HepG2 (cell line): ENCODE measurements at regions of chr10 and their contacts with region 1.

Region 1: DNA sequence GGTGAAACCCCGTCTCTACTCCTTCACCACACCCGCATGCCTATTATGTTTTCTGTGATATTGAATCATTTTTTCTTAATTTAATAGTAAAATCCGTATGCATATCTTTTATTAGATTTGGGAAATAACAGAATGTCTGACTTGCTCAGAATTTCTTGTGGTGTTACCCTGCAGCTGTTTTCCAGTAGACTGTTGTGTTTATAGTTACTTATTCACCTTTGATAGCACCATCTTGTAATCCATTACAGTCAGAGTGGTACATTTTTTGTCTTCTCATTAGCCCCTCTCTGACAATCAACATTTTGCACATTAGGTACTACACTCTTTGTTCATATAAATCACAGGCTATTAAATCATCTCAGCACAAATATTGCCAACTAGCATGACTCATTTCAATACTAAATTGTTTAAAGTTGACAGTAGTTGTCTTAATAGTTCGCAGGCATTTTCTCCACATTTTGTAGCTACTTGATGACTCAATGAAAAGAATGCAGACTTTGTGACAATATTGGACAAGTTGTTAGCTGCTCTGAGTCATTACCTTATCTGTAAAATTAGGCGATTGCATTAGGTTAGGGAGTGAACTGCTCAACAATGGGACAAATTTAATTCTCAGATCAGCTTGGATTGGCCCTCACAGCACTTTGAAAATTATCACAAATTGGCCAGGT is 17.8 kb upstream of the SLC16A12 start:
- DNase-seq: peak; percentile 37
- ATAC-seq: no peak
- H3K4me3 ChIP-seq: no peak overlapping the region
- H3K27ac ChIP-seq: no peak overlapping the region
- H3K4me1 ChIP-seq: peaks cover 9% of the 10 kb centered on the region; the same call in 1 of the 2 replicates
- H3K27me3 ChIP-seq: no peaks in the 10 kb centered on the region
- CTCF ChIP-seq: no peak
- EP300 ChIP-seq: no peak
- POLR2A ChIP-seq: no peak
- RAD21 ChIP-seq: no peak

Region 2: DNA sequence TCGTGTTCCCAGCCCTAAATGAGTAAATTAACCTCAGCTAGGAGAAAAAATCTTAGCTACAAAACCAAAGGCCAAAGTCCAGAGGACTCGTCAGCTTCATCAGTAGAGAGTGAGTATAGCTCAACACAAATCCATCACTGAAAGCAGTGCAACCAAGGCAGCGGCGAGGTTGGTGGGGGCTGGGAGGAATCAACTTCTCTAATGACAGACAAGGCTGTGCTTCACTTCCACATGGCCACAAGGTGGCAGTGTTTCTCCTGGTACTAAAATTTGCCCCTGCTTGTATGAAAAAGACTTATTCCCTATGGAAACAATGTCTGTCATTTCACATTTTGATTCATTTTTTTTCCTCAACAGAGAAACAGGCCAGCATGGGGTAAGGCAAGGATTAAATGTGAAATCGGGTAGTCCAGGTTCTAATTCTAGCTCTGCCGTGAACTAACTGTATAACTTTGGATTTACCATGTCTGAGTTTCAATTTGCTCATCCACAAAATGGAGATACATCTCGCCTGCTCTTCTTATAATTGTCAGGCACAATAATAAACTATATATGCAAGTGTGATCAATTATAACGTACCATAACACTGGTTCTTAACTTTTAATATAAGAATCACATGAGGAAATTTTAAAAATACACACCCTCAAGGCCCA is 523.3 kb before region 1 on chr10:
- CTCF ChIA-PET with region 1: no interaction called
- POLR2A ChIA-PET with region 1: no interaction called
- in situ Hi-C with region 1: no loop called
- intact Hi-C with region 1: loop called (anchors 10 kb)
- DNase-seq: peak; percentile 53
- ATAC-seq: peak; percentile 79
- H3K4me3 ChIP-seq: no peak overlapping the region
- H3K27ac ChIP-seq: no peak overlapping the region
- H3K4me1 ChIP-seq: no peaks in the 10 kb centered on the region
- H3K27me3 ChIP-seq: no peaks in the 10 kb centered on the region
- CTCF ChIP-seq: peak; percentile 86
- EP300 ChIP-seq: no peak
- POLR2A ChIP-seq: no peak
- RAD21 ChIP-seq: peak; percentile 31; the same call in 1 of the 2 replicates

Region 3: DNA sequence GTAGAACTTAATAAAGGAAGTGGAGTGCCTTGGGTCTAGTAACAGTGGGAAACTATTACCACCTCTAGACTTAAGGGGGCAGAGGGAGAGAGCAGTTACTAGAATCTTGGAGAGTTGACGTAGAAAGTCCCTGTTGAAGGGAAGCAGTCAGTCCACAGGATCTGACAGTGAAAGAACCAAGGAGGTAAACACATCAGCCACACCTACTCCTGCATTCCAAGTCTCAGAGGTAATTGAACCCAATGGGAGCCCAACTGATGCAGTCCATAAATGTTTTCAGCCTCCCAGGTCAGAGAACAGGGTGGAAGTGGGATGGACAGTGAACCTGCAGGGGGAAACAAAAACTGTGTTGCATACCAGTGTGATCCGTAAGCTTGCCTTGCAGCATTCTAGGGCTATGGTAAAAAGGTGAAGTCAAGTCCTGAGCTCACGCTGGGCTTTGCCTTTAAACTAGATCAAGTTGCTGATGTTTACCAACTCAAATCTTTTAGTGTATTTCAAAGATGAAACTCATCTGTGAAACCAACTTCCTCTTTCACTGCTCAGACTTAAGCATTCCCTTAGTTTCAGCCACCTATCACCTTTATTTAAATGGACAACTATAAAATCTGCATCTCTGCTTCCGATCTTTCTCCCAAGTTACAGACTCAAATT is 75.0 kb before region 1 on chr10:
- CTCF ChIA-PET with region 1: no interaction called
- POLR2A ChIA-PET with region 1: no interaction called
- in situ Hi-C with region 1: no loop called
- intact Hi-C with region 1: loop called (anchors 5 kb)
- DNase-seq: no peak
- ATAC-seq: no peak
- H3K4me3 ChIP-seq: no peak overlapping the region
- H3K27ac ChIP-seq: no peak overlapping the region
- H3K4me1 ChIP-seq: peaks cover 47% of the 10 kb centered on the region
- H3K27me3 ChIP-seq: no peaks in the 10 kb centered on the region
- CTCF ChIP-seq: no peak
- EP300 ChIP-seq: no peak
- POLR2A ChIP-seq: no peak
- RAD21 ChIP-seq: no peak